ENCODE measurements at regions of chr4 and their contacts with region 1.

Region 1: DNA sequence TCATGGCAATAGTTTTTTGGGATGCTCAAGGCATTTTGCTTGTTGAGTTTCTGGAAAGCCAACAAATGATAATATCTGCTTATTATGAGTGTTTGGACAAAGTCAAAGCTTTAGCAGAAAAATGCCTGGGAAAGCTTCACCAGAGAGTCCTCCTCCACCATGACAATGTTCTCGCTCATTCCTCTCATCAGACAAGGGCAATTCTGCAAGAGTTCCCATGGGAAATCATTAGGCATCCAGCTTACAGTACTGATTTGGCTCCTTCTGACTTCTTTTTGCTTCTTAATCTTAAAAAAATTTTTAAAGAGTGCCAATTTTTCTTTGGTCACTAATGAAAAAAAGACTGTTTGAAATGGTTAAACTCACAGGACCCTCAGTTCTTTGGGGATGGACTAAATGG is 136.3 kb downstream of the UBE2K start:
- DNase-seq: no peak
- ATAC-seq: no peak
- H3K4me3 Mint-ChIP-seq: no peak overlapping the region
- H3K27ac Mint-ChIP-seq: no peak overlapping the region
- H3K4me1 Mint-ChIP-seq: no peaks in the 10 kb centered on the region
- H3K27me3 Mint-ChIP-seq: no peaks in the 10 kb centered on the region; the same call in 1 of the 2 replicates
- CTCF ChIP-seq: no peak

Region 2: DNA sequence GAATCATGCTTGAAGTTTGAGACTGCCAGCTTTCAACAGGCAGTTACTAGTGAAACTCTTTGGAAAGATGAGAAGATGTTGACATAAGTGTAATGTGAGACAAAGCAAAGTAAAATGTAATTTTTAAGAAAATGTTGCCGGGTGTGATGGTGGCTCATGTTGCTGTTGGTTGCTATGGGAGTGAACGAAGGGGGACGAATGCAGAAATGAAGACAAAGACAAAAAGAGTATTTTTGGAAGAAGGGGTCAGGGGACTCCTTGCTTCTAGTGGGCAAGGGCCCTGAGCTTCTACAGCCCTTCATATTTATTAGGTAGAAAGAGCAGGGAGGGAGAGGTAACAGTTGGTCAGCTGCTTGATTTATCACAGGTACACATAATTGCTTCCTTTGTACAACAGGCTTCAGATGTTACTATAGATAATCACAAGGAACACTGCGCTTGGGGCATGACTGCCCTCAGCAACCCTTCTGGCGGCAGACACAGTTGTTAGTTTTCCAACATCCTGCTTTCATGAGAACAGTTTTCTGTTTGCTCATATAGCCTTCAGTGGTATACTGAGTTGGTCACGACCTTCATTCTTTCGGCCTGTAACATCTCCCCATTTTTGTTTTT is 295.1 kb before region 1 on chr4:
- CTCF ChIA-PET with region 1: no interaction called
- POLR2A ChIA-PET with region 1: no interaction called
- DNase-seq: no peak
- ATAC-seq: no peak
- H3K4me3 Mint-ChIP-seq: no peak overlapping the region
- H3K27ac Mint-ChIP-seq: peak overlapping the region; percentile 35
- H3K4me1 Mint-ChIP-seq: peaks cover 24% of the 10 kb centered on the region
- H3K27me3 Mint-ChIP-seq: no peaks in the 10 kb centered on the region
- CTCF ChIP-seq: no peak

Region 3: GRCh38 chr4:39682138-39682537 is 152.1 kb before region 1 on chr4:
- CTCF ChIA-PET with region 1: no interaction called
- POLR2A ChIA-PET with region 1: interaction called, 12 read pairs
- DNase-seq: no peak
- ATAC-seq: no peak
- H3K4me3 Mint-ChIP-seq: no peak overlapping the region
- H3K27ac Mint-ChIP-seq: no peak overlapping the region
- H3K4me1 Mint-ChIP-seq: no peaks in the 10 kb centered on the region
- H3K27me3 Mint-ChIP-seq: no peaks in the 10 kb centered on the region
- CTCF ChIP-seq: no peak